ENCODE measurements at regions of chr13 and their contacts with region 1.

Region 1: GRCh38 chr13:26985285-26985878 is 186.2 kb downstream of the USP12 start:
- DNase-seq: peak; percentile 65
- H3K4me3 Mint-ChIP-seq: no peak overlapping the region
- H3K27ac Mint-ChIP-seq: no peak overlapping the region
- H3K4me1 Mint-ChIP-seq: peaks cover 11% of the 10 kb centered on the region
- H3K27me3 Mint-ChIP-seq: peaks cover 38% of the 10 kb centered on the region
- CTCF ChIP-seq: peak; percentile 34

Region 2: DNA sequence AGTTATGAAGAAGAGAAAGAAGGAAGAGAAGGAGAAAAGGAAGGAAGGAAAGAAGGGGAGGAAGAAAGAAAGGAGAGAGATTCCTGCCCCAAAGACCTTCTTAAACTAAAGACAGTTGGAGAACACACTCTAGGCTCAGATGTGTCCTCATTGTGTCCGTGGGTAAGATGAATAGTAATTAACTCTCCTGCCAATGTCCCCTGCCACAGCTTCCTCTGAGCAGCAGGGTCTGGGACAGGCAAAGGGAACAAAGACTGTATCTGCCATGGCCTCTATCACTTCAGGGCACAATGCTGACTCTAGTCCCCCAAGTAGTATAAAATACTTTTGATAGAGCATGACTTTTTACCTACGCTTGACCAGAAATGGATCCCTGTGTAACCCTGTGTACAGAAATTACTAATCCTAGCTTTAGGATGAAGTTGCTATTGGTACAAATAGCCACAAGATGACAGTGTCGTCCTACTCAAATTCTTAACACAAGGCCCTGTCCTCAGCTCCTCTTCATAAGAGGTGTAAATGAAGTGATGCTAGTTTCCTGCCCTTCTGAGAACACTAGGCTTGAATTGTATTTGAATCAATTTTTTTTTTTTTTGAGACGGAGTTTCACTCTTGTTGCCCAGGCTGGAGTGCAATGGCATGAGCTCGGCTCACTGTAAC is 38.6 kb before region 1 on chr13:
- CTCF ChIA-PET with region 1: interaction called, 12 read pairs
- intact Hi-C with region 1: no loop called
- DNase-seq: no peak
- H3K4me3 Mint-ChIP-seq: no peak overlapping the region
- H3K27ac Mint-ChIP-seq: no peak overlapping the region
- H3K4me1 Mint-ChIP-seq: no peaks in the 10 kb centered on the region
- H3K27me3 Mint-ChIP-seq: peaks cover 52% of the 10 kb centered on the region
- CTCF ChIP-seq: peak; percentile 22

Region 3: GRCh38 chr13:27086599-27087265 is 101.3 kb after region 1 on chr13:
- CTCF ChIA-PET with region 1: no interaction called
- intact Hi-C with region 1: no loop called
- DNase-seq: no peak
- H3K4me3 Mint-ChIP-seq: no peak overlapping the region
- H3K27ac Mint-ChIP-seq: no peak overlapping the region
- H3K4me1 Mint-ChIP-seq: no peaks in the 10 kb centered on the region
- H3K27me3 Mint-ChIP-seq: no peaks in the 10 kb centered on the region
- CTCF ChIP-seq: no peak

Region 4: DNA sequence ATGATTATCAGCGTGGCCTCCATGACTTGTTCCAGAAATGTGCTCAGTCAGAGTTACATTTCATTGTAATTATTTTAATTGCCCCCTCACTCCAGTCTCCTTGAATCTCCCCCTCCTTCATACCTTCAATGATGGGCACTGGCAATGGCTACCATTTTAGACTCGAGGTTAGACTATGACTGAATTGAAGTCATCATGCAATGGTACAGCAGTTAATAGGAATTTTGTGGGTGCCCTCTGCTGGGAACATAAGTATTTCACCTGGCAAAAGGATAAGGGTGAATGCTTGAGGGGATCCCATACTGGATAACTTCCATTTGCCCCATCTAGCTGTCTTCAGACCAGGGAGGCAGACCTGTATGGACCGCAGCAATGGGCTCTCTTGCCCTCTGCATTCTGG is 218.5 kb after region 1 on chr13:
- CTCF ChIA-PET with region 1: no interaction called
- intact Hi-C with region 1: loop called (anchors 5 kb)
- DNase-seq: no peak
- H3K4me3 Mint-ChIP-seq: no peak overlapping the region
- H3K27ac Mint-ChIP-seq: no peak overlapping the region
- H3K4me1 Mint-ChIP-seq: peaks cover 31% of the 10 kb centered on the region
- H3K27me3 Mint-ChIP-seq: no peaks in the 10 kb centered on the region
- CTCF ChIP-seq: no peak

Region 5: GRCh38 chr13:27283906-27284493 is 298.6 kb after region 1 on chr13:
- CTCF ChIA-PET with region 1: interaction called, 8 read pairs
- intact Hi-C with region 1: loop called (anchors 1 kb)
- DNase-seq: peak; percentile 48
- H3K4me3 Mint-ChIP-seq: no peak overlapping the region
- H3K27ac Mint-ChIP-seq: no peak overlapping the region
- H3K4me1 Mint-ChIP-seq: no peaks in the 10 kb centered on the region
- H3K27me3 Mint-ChIP-seq: no peaks in the 10 kb centered on the region
- CTCF ChIP-seq: no peak

Region 6: GRCh38 chr13:27362064-27362883 is 376.9 kb after region 1 on chr13:
- CTCF ChIA-PET with region 1: interaction called, 13 read pairs
- intact Hi-C with region 1: loop called (anchors 1 kb)
- DNase-seq: peak; percentile 82
- H3K4me3 Mint-ChIP-seq: peak overlapping the region; percentile 41
- H3K27ac Mint-ChIP-seq: no peak overlapping the region
- H3K4me1 Mint-ChIP-seq: no peaks in the 10 kb centered on the region
- H3K27me3 Mint-ChIP-seq: peaks cover 27% of the 10 kb centered on the region
- CTCF ChIP-seq: peak; percentile 80

Measured in Calu3 (cell line).